ENCODE measurements at regions of chr11 and their contacts with region 1.

Region 1: GRCh38 chr11:116871248-116871647 is 33.8 kb upstream of the APOA1 start:
- DNase-seq: peak in 2 of 3 donors; percentile 42 to 58
- H3K4me3 ChIP-seq: no peak overlapping the region
- H3K27ac ChIP-seq: peak overlapping the region; percentile 53 to 61
- H3K4me1 ChIP-seq: peaks cover 14 to 42% (median 34%) of the 10 kb centered on the region in 4 experiments
- H3K27me3 ChIP-seq: no peaks in the 10 kb centered on the region

Region 2: GRCh38 chr11:116835791-116836631 is 35.2 kb before region 1 on chr11:
- CTCF ChIA-PET with region 1: interaction called, 14 read pairs
- POLR2A ChIA-PET with region 1: no interaction called
- DNase-seq: peak; percentile 92 to 95 (median 94)
- H3K4me3 ChIP-seq: peak overlapping the region; percentile 46 to 79 (median 59)
- H3K27ac ChIP-seq: peak overlapping the region in 1 of 2 experiments; percentile 67
- H3K4me1 ChIP-seq: peaks cover 0 to 30% (median 22%) of the 10 kb centered on the region in 4 experiments
- H3K27me3 ChIP-seq: no peaks in the 10 kb centered on the region

Region 3: GRCh38 chr11:116853461-116854073 is 17.7 kb before region 1 on chr11:
- CTCF ChIA-PET with region 1: interaction called, 10 read pairs
- POLR2A ChIA-PET with region 1: interaction called, 6 read pairs
- DNase-seq: peak; percentile 89 to 98 (median 97)
- H3K4me3 ChIP-seq: peak overlapping the region in 2 of 7 experiments; percentile 27 to 57
- H3K27ac ChIP-seq: peak overlapping the region; percentile 79 to 87
- H3K4me1 ChIP-seq: peaks cover 40 to 73% (median 72%) of the 10 kb centered on the region in 4 experiments
- H3K27me3 ChIP-seq: no peaks in the 10 kb centered on the region

Region 4: DNA sequence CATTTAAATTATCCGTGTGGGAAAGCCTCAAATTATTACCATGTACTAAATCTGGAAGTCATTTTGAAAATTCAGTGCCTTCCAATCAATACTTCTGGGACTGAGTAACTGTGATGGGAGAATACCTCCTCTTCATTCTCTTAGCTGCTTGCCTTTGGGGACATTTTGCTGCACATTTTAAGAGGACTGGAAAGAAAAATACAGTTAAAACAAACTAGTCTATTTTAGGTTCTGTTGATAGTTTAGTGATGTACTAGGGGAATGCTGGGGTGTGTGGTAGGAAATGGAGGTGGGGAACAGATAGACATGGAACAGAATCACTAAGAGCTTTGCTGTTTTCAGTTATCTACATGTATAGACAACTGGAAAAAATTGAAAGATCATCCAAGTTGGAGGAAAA is 31.8 kb after region 1 on chr11:
- CTCF ChIA-PET with region 1: no interaction called
- POLR2A ChIA-PET with region 1: no interaction called
- DNase-seq: no peak
- H3K4me3 ChIP-seq: no peak overlapping the region
- H3K27ac ChIP-seq: no peak overlapping the region
- H3K4me1 ChIP-seq: peaks cover 0 to 14% (median 6%) of the 10 kb centered on the region in 4 experiments
- H3K27me3 ChIP-seq: no peaks in the 10 kb centered on the region

Region 5: DNA sequence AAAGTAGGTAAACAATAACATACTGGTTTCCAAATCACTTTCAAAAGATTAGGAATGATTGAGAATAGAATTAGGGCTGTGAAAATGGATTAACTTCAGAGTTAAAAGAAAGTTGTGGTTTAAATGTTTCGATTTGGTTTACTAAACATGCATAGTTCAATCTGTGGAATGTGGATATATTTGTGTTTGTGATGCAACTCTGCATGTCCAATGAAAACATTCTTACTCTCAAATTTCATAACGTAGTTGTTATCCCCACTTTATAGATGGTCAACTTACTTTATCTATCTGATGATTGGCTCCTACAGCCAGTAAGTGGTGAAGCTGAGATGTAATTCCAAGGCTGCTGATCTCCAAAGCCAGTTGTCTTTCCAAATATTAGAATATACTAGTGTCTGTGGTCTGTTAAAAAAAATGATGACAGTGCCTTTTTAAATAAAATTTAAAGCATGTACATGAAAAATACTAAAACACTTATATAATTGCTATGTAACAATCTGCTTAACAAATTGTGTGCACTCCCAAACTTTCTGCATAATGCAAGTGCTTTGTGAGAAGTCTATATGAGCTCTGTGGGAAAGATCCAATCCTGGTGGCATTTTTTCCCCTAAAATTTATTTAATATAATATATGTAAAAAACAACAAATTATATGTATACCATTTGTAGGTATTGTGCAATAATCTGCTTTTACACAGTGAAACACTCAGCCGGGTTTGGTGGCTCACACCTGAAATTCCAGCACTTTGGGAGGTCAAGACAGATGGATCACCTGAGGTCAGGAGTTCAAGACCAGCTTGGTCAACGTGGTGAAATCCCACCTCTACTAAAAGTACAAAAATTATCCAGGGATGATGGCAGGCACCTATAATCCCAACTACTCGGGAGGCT is 236.7 kb after region 1 on chr11:
- CTCF ChIA-PET with region 1: interaction called, 10 read pairs
- POLR2A ChIA-PET with region 1: no interaction called
- DNase-seq: no peak
- H3K4me3 ChIP-seq: no peak overlapping the region
- H3K27ac ChIP-seq: no peak overlapping the region
- H3K4me1 ChIP-seq: no peaks in the 10 kb centered on the region
- H3K27me3 ChIP-seq: no peaks in the 10 kb centered on the region

Measured in common myeloid progenitor, CD34-positive (primary cell).